ENCODE measurements at regions of chr17 and their contacts with region 1.

Region 1: GRCh38 chr17:59804901-59805465 is 87.8 kb downstream of the TUBD1 start:
- DNase-seq: peak; percentile 61 to 92 (median 82)
- H3K4me3 ChIP-seq: peak overlapping the region; percentile 2 to 72 (median 51)
- H3K4me3 Mint-ChIP-seq: peak overlapping the region; percentile 70 to 83
- H3K27ac ChIP-seq: peak overlapping the region; percentile 83 to 95
- H3K27ac Mint-ChIP-seq: peak overlapping the region; percentile 95 to 99 (median 98)
- H3K4me1 ChIP-seq: peaks cover 32 to 77% of the 10 kb centered on the region in 2 donors
- H3K4me1 Mint-ChIP-seq: peaks cover 35% of the 10 kb centered on the region
- H3K27me3 ChIP-seq: no peaks in the 10 kb centered on the region
- H3K27me3 Mint-ChIP-seq: peaks cover 0 to 2% (median 0%) of the 10 kb centered on the region in 3 donors
- CTCF ChIP-seq: no peak

Region 2: DNA sequence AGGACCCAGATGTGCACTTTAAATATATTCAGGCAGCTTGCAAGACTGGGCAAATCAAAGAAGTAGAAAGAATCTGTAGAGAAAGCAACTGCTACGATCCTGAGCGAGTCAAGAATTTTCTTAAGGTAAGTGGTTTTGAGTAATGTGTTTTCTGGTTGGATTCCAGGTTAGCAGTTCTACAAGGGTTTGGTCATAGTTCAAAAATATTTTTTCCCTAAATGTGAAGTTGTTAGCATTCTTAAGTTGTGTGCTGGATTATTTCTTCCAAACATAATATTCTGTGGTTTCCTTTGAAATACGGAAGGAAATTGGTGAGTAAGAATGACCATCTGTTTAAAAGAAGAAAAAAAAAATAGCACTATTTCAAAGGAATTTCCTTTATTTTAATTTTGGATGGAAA is 136.2 kb before region 1 on chr17:
- intact Hi-C with region 1: no loop called
- DNase-seq: peak; percentile 28 to 64 (median 60)
- H3K4me3 ChIP-seq: peak overlapping the region; percentile 3 to 63 (median 20)
- H3K4me3 Mint-ChIP-seq: peak overlapping the region in 1 of 2 donors; percentile 75
- H3K27ac ChIP-seq: peak overlapping the region in 1 of 2 donors; percentile 68
- H3K27ac Mint-ChIP-seq: peak overlapping the region; percentile 77 to 88 (median 87)
- H3K4me1 ChIP-seq: peaks cover 33 to 36% of the 10 kb centered on the region in 2 donors
- H3K4me1 Mint-ChIP-seq: peaks cover 35% of the 10 kb centered on the region
- H3K27me3 ChIP-seq: no peaks in the 10 kb centered on the region
- H3K27me3 Mint-ChIP-seq: no peaks in the 10 kb centered on the region
- CTCF ChIP-seq: no peak

Region 3: DNA sequence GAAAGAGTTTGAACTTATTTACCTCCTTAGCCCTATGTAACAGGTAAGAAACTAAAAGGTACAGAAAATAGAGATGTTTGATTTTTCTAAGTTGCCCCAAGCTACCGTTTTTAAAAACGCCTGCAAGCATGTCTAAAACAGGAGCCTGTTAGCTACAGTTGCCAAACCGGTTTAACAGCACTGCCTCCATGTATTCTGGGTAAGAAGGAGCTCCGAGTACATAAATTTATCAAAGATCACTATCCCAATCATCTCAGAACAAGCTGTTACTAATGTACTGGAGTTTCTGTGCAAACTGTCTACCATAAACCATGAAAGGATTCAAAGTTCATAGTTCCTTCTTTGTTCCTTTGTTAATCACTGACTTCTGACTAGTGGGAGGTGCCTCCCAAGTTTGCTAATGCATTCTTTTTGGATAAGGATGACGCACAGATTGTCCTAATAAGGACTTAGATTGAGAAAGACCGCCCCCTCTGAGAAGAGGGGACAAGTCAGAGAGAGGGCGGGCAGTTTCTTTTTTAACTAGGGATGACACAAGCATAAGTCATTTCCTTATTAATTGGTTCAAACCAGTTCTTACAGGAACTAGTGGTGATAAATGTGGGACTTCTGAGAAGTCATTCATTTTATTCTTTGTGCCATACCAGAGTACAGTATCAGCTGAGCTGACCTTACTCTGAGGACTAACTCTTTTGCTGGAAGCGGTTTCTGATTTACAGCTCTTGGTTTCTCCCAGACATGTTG is 32.5 kb after region 1 on chr17:
- intact Hi-C with region 1: loop called (anchors 5 kb)
- DNase-seq: peak; percentile 97 to 100 (median 99)
- H3K4me3 ChIP-seq: peak overlapping the region; percentile 71 to 100 (median 98)
- H3K4me3 Mint-ChIP-seq: peak overlapping the region; percentile 98 to 100
- H3K27ac ChIP-seq: peak overlapping the region; percentile 85 to 95
- H3K27ac Mint-ChIP-seq: peak overlapping the region; percentile 92 to 100 (median 97)
- H3K4me1 ChIP-seq: peaks cover 28 to 31% of the 10 kb centered on the region in 2 donors
- H3K4me1 Mint-ChIP-seq: peaks cover 31% of the 10 kb centered on the region
- H3K27me3 ChIP-seq: no peaks in the 10 kb centered on the region
- H3K27me3 Mint-ChIP-seq: peaks cover 0 to 3% (median 0%) of the 10 kb centered on the region in 3 donors
- CTCF ChIP-seq: no peak